ENCODE measurements at regions of chr5 and their contacts with region 1.

Region 1: GRCh38 chr5:132238169-132238744 is 10.6 kb upstream of the P4HA2 start:
- DNase-seq: peak; percentile 80
- H3K4me3 Mint-ChIP-seq: no peak overlapping the region
- H3K27ac Mint-ChIP-seq: no peak overlapping the region
- H3K4me1 Mint-ChIP-seq: peaks cover under 1% of the 10 kb centered on the region
- H3K27me3 Mint-ChIP-seq: no peaks in the 10 kb centered on the region
- CTCF ChIP-seq: peak; percentile 96

Region 2: DNA sequence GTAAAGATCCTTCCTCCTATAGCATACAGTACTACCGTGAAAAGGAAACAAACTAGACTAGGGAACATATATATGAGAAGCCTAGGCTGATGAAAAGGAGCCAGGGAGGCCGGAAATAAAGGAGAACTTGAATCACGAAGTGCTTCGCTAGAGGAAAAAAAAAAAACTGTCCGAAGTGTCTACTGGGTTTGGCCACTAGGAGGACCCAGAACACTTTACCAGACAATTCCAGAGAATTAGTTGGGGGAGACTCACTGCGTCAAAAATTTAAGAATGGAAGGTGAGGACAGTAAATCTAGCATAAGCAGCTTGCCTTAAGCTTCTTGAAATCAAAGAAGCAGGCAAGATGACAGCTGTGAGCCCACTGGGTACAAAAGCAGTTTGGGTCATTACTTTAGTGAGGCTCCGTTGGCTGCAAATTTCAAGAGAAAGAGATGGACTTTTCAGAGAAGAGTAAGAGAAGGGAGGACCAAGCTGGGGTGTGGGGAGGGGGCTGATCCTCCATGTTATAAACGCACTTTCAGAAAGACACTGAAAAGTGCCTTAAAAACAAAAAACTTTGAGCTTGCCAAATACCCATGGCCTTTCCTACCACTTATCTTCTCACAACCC is 58.0 kb before region 1 on chr5:
- CTCF ChIA-PET with region 1: interaction called, 48 read pairs
- POLR2A ChIA-PET with region 1: interaction called, 4 read pairs
- intact Hi-C with region 1: no loop called
- DNase-seq: peak; percentile 82
- H3K4me3 Mint-ChIP-seq: no peak overlapping the region
- H3K27ac Mint-ChIP-seq: no peak overlapping the region
- H3K4me1 Mint-ChIP-seq: peaks cover 16% of the 10 kb centered on the region
- H3K27me3 Mint-ChIP-seq: no peaks in the 10 kb centered on the region
- CTCF ChIP-seq: peak; percentile 89

Region 3: GRCh38 chr5:132227485-132228240 is 10.6 kb before region 1 on chr5 and contains the start of gene P4HA2:
- CTCF ChIA-PET with region 1: interaction called, 130 read pairs
- POLR2A ChIA-PET with region 1: interaction called, 19 read pairs
- intact Hi-C with region 1: no loop called
- DNase-seq: peak; percentile 86
- H3K4me3 Mint-ChIP-seq: peak within 1 kb of the TSS; percentile 74
- H3K27ac Mint-ChIP-seq: no peak within 1 kb of the TSS
- H3K4me1 Mint-ChIP-seq: peaks cover 32% of the 10 kb centered on the region
- H3K27me3 Mint-ChIP-seq: no peaks in the 10 kb centered on the region
- CTCF ChIP-seq: peak; percentile 21
- total RNA-seq, gene P4HA2: 53.1 and 91.1 TPM in 2 replicates

Region 4: DNA sequence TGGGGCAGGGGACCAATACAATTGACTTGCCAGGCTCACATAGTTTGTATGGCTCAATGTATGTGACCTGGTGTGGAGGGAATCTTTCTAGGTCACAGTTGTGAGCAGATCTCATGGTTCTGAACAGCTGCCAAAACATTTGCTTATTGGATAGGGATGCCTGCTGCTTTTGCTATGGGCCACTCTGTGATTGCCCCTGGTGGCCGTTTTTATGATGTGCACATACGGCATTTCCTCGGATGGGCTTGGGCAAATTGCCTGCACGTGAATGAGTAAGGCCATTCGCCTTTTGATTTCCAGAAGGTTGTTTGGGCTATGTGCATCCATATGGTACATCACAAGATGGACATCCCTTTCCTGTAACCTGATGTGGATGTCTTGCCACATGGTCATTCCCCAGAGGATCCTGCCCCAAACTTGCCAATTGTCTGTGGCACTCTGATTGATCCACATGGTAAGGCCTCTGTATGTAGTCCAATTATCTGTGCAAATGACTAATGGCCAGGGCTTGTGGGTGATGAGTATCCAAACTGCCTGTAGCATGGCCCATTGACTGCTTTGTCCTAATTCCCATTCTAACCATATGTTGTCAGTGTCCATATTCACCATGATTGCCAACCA is 45.3 kb after region 1 on chr5:
- CTCF ChIA-PET with region 1: interaction called, 32 read pairs
- POLR2A ChIA-PET with region 1: interaction called, 3 read pairs
- intact Hi-C with region 1: no loop called
- DNase-seq: peak; percentile 85
- H3K4me3 Mint-ChIP-seq: no peak overlapping the region
- H3K27ac Mint-ChIP-seq: no peak overlapping the region
- H3K4me1 Mint-ChIP-seq: no peaks in the 10 kb centered on the region
- H3K27me3 Mint-ChIP-seq: peaks cover 10% of the 10 kb centered on the region
- CTCF ChIP-seq: peak; percentile 43

Region 5: GRCh38 chr5:132334812-132335211 is 96.6 kb after region 1 on chr5:
- CTCF ChIA-PET with region 1: interaction called, 12 read pairs
- POLR2A ChIA-PET with region 1: no interaction called
- intact Hi-C with region 1: no loop called
- DNase-seq: peak; percentile 45
- H3K4me3 Mint-ChIP-seq: no peak overlapping the region
- H3K27ac Mint-ChIP-seq: peak overlapping the region; percentile 52
- H3K4me1 Mint-ChIP-seq: peaks cover 8% of the 10 kb centered on the region
- H3K27me3 Mint-ChIP-seq: no peaks in the 10 kb centered on the region
- CTCF ChIP-seq: no peak

Region 6: DNA sequence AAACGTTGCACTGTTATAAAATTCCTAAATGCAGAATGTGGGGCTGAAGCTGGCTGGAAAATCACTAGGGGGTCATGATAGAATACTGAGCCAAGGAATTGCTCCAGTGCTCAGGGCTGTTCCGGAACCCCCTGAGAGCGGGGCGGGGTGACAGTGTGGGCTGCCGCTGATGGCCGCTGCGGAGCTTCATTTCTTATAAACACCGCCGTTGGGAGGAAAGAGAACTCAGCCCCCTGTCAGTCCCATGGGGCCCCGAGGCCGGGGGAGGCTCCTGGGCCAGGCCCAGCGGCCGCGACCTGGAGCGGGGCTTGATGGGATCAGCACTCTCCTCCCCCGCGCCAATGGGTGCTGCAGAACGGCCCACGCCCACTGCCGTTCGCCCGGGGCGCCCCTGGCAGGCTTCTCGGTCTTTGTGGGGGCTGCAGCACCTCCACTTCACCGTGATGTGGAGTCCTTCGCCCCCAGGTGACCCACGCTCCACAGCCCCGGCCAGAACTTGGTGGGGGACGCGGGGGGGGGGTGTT is 257.5 kb after region 1 on chr5:
- CTCF ChIA-PET with region 1: interaction called, 54 read pairs
- POLR2A ChIA-PET with region 1: interaction called, 3 read pairs
- intact Hi-C with region 1: no loop called
- DNase-seq: peak; percentile 92
- H3K4me3 Mint-ChIP-seq: peak overlapping the region; percentile 80
- H3K27ac Mint-ChIP-seq: peak overlapping the region; percentile 34
- H3K4me1 Mint-ChIP-seq: peaks cover 47% of the 10 kb centered on the region
- H3K27me3 Mint-ChIP-seq: no peaks in the 10 kb centered on the region
- CTCF ChIP-seq: no peak

Measured in MCF 10A (cell line).